Activated CD4-positive, alpha-beta T cell treated with anti-CD3 and anti-CD28 coated beads for 36 hours (primary cell): ENCODE measurements at regions of chr1 and their contacts with region 1.

Region 1: DNA sequence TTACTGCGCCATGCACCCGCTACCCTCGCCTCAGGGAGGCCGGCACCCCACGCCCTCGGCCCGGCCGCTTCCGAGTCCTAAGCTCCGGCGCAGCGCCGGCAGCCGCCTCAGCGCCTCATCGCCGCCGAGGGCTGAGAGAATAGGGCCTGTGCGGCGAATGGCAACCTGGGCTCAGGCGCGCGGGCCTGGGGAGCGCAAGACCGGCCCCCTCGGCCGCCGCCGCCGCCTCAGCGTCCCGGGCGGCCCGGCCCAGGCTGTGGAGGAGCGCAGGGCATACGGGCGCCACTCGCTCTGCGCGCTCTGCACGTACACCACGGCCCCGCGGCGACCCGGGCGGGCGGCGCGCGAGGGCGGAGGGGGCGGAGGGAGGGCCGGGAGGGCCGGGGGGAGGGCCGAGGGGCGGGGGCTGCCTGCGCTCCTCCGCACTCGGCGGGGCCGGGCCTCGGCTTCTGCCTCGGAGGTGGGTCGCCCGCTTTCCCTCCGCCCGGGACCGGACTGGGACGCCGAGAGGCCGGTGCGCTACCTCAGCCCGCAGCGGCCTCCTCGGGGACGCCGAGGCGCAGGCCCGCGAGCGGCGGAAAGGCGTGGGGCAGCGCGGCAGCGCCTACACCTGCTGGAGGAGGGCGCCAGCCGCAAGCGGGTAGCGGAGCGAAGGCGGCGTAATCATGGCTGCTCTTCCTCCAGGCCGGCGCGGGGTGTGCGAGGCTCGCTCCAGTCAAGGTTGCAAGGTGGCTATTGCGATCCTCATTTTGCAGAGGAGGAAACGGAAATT is at the start of gene EGLN1:
- DNase-seq: peak; percentile 92
- ATAC-seq: peak; percentile 83
- H3K4me3 Mint-ChIP-seq: peak within 1 kb of the TSS; percentile 86
- H3K27ac Mint-ChIP-seq: peak within 1 kb of the TSS; percentile 88
- H3K4me1 Mint-ChIP-seq: peaks cover 31% of the 10 kb centered on the region
- H3K27me3 Mint-ChIP-seq: no peaks in the 10 kb centered on the region
- total RNA-seq, gene EGLN1: 31.5 to 43.7 TPM

Region 2: GRCh38 chr1:231240883-231241735 is 181.1 kb before region 1 on chr1 and contains the start of gene GNPAT:
- CTCF ChIA-PET with region 1: no interaction called
- POLR2A ChIA-PET with region 1: no interaction called
- intact Hi-C with region 1: loop called in 1 of 2 experiments (anchors 1 kb)
- DNase-seq: peak; percentile 94
- ATAC-seq: peak; percentile 98
- H3K4me3 Mint-ChIP-seq: peak within 1 kb of the TSS; percentile 98
- H3K27ac Mint-ChIP-seq: peak within 1 kb of the TSS; percentile 95
- H3K4me1 Mint-ChIP-seq: peaks cover 58% of the 10 kb centered on the region
- H3K27me3 Mint-ChIP-seq: no peaks in the 10 kb centered on the region
- total RNA-seq, gene GNPAT: 58.0 to 62.0 TPM

Region 3: DNA sequence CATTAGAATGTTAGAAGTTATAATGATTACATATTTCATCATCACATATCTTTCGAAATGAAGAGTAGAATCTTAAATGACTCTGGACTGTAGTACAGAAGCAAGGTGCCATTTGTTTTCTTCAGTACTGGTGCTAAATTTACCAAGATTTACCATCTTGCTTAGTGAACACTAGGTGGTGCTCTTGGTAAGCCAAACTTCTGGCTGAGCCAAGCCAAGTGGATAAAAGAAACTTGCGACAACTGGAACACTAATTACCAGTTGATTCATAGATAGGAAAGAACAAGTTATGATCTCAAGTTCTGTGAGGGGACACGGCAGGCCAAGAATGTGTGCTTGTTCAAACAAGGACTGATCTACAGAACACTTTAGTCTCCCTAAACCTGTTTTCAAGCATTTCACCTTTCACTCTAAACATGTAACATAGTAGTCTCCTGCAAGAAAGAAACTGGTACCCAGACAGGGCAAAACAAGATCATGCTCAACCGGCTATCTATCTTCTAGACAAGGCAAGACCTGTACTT is 64.3 kb before region 1 on chr1:
- CTCF ChIA-PET with region 1: interaction called, 7 read pairs
- POLR2A ChIA-PET with region 1: no interaction called
- intact Hi-C with region 1: loop called (anchors 1 to 2 kb)
- DNase-seq: peak; percentile 52
- ATAC-seq: peak; percentile 85
- H3K4me3 Mint-ChIP-seq: no peak overlapping the region
- H3K27ac Mint-ChIP-seq: peak overlapping the region; percentile 59
- H3K4me1 Mint-ChIP-seq: peaks cover 6% of the 10 kb centered on the region
- H3K27me3 Mint-ChIP-seq: no peaks in the 10 kb centered on the region

Region 4: GRCh38 chr1:231390071-231390470 is 32.1 kb before region 1 on chr1:
- CTCF ChIA-PET with region 1: interaction called, 3 read pairs
- POLR2A ChIA-PET with region 1: interaction called, 8 read pairs
- intact Hi-C with region 1: loop called in 1 of 2 experiments (anchors 2 kb)
- DNase-seq: peak; percentile 48
- ATAC-seq: peak; percentile 79
- H3K4me3 Mint-ChIP-seq: no peak overlapping the region
- H3K27ac Mint-ChIP-seq: peak overlapping the region; percentile 75
- H3K4me1 Mint-ChIP-seq: peaks cover 49% of the 10 kb centered on the region
- H3K27me3 Mint-ChIP-seq: no peaks in the 10 kb centered on the region

Region 5: DNA sequence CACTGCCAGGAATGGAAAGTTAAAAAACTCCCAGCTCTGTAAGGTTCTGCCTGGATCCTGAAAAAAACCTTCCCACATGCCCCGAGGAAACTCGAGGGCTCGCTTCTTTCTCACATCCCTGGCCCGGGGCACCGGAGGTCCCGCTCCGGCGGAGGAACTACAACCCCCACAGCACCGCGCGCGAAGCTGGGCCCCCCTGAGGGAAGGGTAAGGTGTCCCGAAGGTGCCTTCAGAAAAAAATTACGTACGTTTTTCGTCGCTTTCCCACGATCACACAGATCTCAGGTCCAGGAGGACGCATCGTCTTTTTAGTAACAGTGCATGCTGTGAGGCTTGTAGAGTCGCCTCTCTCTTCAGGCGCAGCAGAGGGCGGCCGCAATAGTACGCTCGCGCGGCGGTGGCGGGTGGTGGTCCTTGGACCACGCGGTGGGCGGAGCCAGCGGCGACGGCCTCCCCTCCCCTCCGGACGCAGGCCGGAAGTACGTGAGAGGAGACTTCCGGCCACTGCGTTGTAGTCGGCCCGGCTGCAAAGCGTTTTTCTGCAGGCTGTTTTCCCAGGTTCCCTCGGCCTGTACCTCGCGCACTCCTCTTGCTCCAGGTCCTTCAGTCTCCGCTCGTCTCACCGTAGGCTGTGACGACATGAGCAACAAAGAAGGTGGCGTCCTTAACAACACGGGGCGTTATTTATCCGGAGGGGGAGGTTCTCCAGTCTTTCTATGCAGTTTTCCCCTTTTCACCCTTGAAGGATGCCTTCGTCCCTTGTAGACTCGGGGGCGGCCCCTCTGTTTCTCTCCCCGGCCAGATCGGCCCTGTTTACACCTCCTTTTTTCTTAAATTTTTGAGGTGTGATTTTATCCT is 106.2 kb after region 1 on chr1 and contains the start of gene TSNAX:
- CTCF ChIA-PET with region 1: no interaction called
- POLR2A ChIA-PET with region 1: no interaction called
- intact Hi-C with region 1: loop called (anchors 1 kb)
- DNase-seq: peak; percentile 94
- ATAC-seq: peak; percentile 93
- H3K4me3 Mint-ChIP-seq: peak within 1 kb of the TSS; percentile 88
- H3K27ac Mint-ChIP-seq: peak within 1 kb of the TSS; percentile 99
- H3K4me1 Mint-ChIP-seq: peaks cover 45% of the 10 kb centered on the region
- H3K27me3 Mint-ChIP-seq: no peaks in the 10 kb centered on the region
- total RNA-seq, gene TSNAX: 36.5 to 46.7 TPM